OCI-LY7 (cell line): ENCODE measurements at regions of chr17 and their contacts with region 1.

Region 1: GRCh38 chr17:50087246-50087911 is 7.8 kb upstream of the PDK2 start:
- DNase-seq: peak; percentile 76
- H3K4me3 ChIP-seq: no peak overlapping the region
- H3K27ac ChIP-seq: peak overlapping the region; percentile 1
- H3K4me1 ChIP-seq: no peaks in the 10 kb centered on the region
- CTCF ChIP-seq: peak; percentile 97

Region 2: GRCh38 chr17:49861150-49861892 is 226.1 kb before region 1 on chr17:
- CTCF ChIA-PET with region 1: no interaction called
- POLR2A ChIA-PET with region 1: no interaction called
- intact Hi-C with region 1: loop called (anchors 1 kb)
- DNase-seq: peak; percentile 63
- H3K4me3 ChIP-seq: no peak overlapping the region
- H3K27ac ChIP-seq: no peak overlapping the region
- H3K4me1 ChIP-seq: no peaks in the 10 kb centered on the region
- CTCF ChIP-seq: peak; percentile 96

Region 3: GRCh38 chr17:49952209-49952911 is 135.0 kb before region 1 on chr17:
- CTCF ChIA-PET with region 1: no interaction called
- POLR2A ChIA-PET with region 1: no interaction called
- intact Hi-C with region 1: loop called (anchors 5 kb)
- DNase-seq: peak; percentile 77
- H3K4me3 ChIP-seq: no peak overlapping the region
- H3K27ac ChIP-seq: no peak overlapping the region
- H3K4me1 ChIP-seq: no peaks in the 10 kb centered on the region
- CTCF ChIP-seq: peak; percentile 95

Region 4: GRCh38 chr17:50026901-50027630 is 60.3 kb before region 1 on chr17:
- CTCF ChIA-PET with region 1: interaction called, 4 read pairs
- POLR2A ChIA-PET with region 1: no interaction called
- intact Hi-C with region 1: loop called (anchors 1 kb)
- DNase-seq: peak; percentile 64
- H3K4me3 ChIP-seq: no peak overlapping the region
- H3K27ac ChIP-seq: no peak overlapping the region
- H3K4me1 ChIP-seq: peaks cover 4% of the 10 kb centered on the region
- CTCF ChIP-seq: peak; percentile 96